H1 (cell line): ENCODE measurements at regions of chr1 and their contacts with region 1.

Region 1: DNA sequence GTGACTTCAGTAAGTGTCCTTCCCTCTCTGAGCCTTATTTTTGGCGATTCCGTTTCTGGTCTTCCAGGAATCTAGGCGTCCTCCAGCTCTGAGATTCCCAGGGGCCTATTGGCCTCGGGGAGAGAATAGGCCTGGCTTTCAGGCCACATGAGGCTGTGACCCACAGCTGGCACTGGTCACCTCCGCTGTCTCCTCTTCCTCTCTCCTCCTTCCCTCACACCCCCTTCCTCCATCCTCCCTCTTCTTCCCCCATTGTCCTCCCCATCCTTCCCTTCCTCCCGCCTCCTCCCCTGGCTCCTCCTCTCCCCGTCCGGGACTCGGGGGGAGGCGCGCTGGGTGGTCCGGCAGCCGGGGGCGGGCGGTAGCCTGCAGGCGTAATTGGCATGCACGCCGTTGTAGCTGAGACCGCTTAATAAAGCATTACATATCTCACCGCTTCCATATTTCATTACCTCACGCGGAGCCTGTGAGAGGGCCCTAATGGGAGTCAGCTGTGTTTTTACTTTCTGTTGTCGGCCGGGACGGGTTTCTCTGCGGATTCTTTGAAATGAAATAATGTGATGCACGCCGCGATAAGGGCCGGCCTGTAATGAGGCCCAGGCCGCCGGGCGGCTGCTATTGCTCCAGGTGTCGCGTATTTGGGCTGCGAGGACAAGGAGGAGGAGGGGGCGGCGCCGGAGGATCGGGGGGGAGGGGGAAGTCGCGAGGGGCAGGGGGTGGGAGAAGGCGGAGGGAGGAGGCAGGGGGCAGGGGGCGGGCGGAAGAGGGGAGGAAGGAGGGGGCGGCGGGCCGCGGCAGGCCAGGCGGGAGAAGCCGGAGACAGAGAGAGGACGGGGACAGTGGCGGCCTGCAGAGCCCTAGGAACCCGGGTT is 95.3 kb downstream of the FOXD2 start:
- DNase-seq: peak in 1 of 2 experiments; percentile 84
- H3K4me3 ChIP-seq: peak overlapping the region; percentile 48 to 67 (median 58)
- H3K27ac ChIP-seq: no peak overlapping the region
- H3K4me1 ChIP-seq: peaks cover 3 to 10% (median 7%) of the 10 kb centered on the region in 4 experiments
- H3K27me3 ChIP-seq: peaks cover 0 to 7% (median 4%) of the 10 kb centered on the region in 4 experiments; a peak in 2 of 7 replicates
- CTCF ChIP-seq: 0 out of 4 replicates have a peak, but pooled peaks of 1 of the 3 experiments have one; percentile 2
- EP300 ChIP-seq: no peak
- POLR2A ChIP-seq: no peak
- RAD21 ChIP-seq: no peak

Region 2: DNA sequence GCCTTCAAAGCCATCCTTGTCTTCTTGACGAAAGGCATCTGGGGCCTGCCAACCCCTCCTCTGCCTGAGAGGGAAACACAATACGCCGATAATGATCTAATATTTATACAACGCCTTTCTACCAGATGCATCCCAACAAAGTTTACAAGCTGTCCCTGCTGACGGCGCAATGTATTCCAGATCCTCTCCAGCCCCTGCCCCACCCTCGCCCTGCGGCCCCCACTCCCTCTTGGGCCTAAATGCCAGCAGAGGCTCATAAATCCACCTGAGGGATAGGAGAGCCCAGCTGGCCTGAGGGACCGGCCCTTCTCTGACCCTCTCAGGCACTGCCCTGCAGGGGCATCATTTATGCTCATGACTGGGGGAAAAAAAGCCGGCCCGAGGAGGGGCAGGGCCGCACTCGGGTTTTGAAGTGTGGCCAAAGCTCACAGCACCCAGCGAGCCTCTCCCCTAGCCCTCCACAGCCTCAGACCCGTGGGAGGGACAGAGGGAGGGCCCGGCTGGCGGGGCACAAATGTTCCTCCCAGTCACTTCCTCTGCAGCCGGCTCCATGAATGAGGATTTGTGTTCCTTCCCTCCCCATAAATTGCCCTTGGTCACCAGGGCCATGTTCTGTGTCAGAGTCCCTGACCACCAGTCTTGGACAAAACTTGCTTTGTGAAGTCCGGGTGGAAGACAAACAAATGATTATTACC is 45.0 kb after region 1 on chr1:
- CTCF ChIA-PET with region 1: interaction called, 35 read pairs
- POLR2A ChIA-PET with region 1: no interaction called
- DNase-seq: no peak
- H3K4me3 ChIP-seq: no peak overlapping the region
- H3K27ac ChIP-seq: no peak overlapping the region
- H3K4me1 ChIP-seq: peaks cover 4 to 17% (median 9%) of the 10 kb centered on the region in 4 experiments
- H3K27me3 ChIP-seq: no peaks in the 10 kb centered on the region
- CTCF ChIP-seq: no peak
- EP300 ChIP-seq: no peak
- POLR2A ChIP-seq: no peak
- RAD21 ChIP-seq: no peak

Region 3: GRCh38 chr1:47710329-47711071 is 177.3 kb after region 1 on chr1:
- CTCF ChIA-PET with region 1: interaction called, 172 read pairs
- POLR2A ChIA-PET with region 1: no interaction called
- DNase-seq: peak in 1 of 2 experiments; percentile 97
- H3K4me3 ChIP-seq: peak overlapping the region; percentile 20 to 63 (median 47); a peak in 4 of 8 replicates
- H3K27ac ChIP-seq: no peak overlapping the region
- H3K4me1 ChIP-seq: peaks cover 0 to 19% (median 5%) of the 10 kb centered on the region in 4 experiments; a peak in 3 of 7 replicates
- H3K27me3 ChIP-seq: peaks cover 44 to 74% (median 71%) of the 10 kb centered on the region in 4 experiments
- CTCF ChIP-seq: peak; percentile 93 to 97 (median 97)
- EP300 ChIP-seq: no peak
- POLR2A ChIP-seq: no peak
- RAD21 ChIP-seq: peak; percentile 93 to 96